ENCODE measurements at regions of chr1 and their contacts with region 1.

Region 1: GRCh38 chr1:157849229-157849875 is 7.7 kb upstream of the CD5L start:
- DNase-seq: peak; percentile 87
- H3K4me3 ChIP-seq: peak overlapping the region; percentile 56
- H3K27ac ChIP-seq: peak overlapping the region; percentile 90
- H3K4me1 ChIP-seq: peaks cover 63% of the 10 kb centered on the region
- CTCF ChIP-seq: no peak; the same call in 1 of the 2 replicates

Region 2: GRCh38 chr1:157715736-157716135 is 133.6 kb before region 1 on chr1:
- CTCF ChIA-PET with region 1: no interaction called
- POLR2A ChIA-PET with region 1: no interaction called
- intact Hi-C with region 1: no loop called
- DNase-seq: no peak
- H3K4me3 ChIP-seq: no peak overlapping the region
- H3K27ac ChIP-seq: no peak overlapping the region
- H3K4me1 ChIP-seq: peaks cover 17% of the 10 kb centered on the region
- CTCF ChIP-seq: no peak

Region 3: DNA sequence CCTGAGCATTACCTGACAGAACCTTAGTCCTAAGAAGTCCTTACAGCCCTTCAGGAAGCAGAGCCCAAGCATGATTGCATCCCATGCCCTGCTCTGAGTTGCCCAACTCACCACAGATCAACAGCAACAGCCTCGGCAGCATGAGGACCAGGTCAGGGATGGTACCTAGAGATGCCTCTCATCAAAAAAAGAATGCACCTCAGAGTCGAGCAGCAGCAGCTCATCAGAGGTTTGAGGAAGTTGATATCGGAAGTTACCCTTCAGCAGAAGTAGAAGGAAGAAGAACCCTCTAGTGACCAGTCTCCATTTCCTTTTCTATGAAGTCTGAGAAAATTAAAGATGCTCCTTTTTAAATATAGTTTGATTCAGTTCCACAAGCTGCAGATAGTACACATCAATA is 29.5 kb before region 1 on chr1 and contains the start of gene FCRL1:
- CTCF ChIA-PET with region 1: no interaction called
- POLR2A ChIA-PET with region 1: interaction called, 6 read pairs
- intact Hi-C with region 1: loop called (anchors 2 kb)
- DNase-seq: peak; percentile 82
- H3K4me3 ChIP-seq: peak within 1 kb of the TSS; percentile 69
- H3K27ac ChIP-seq: peak within 1 kb of the TSS; percentile 85
- H3K4me1 ChIP-seq: peaks cover 72% of the 10 kb centered on the region
- CTCF ChIP-seq: peak; percentile 36; the same call in 1 of the 2 replicates
- total RNA-seq, gene FCRL1: 42.5 and 62.8 TPM in 2 replicates

Region 4: DNA sequence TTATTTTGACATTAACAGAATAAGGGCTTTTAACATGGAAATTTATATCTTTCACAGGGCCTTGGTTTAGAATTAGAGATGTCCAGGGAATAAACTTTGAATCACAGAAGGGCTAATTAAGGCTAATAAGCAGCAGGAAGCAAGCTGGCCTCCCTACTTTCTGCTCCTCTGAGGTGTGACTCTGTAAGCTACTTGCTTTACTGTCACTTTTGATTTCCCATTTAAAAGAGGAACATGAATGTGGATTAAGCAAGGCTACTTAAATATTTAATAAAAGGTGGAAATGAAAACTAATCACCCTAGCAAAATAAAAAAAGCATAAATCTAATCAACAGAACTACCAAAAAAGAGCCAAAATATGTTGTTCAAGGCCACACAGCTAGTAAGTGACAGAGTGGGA is 21.1 kb after region 1 on chr1:
- CTCF ChIA-PET with region 1: no interaction called
- POLR2A ChIA-PET with region 1: no interaction called
- intact Hi-C with region 1: no loop called
- DNase-seq: no peak
- H3K4me3 ChIP-seq: no peak overlapping the region
- H3K27ac ChIP-seq: no peak overlapping the region
- H3K4me1 ChIP-seq: peaks cover 6% of the 10 kb centered on the region
- CTCF ChIP-seq: no peak